Activated CD4-positive, alpha-beta T cell treated with anti-CD3 and anti-CD28 coated beads, Interleukin-2, amount 10 ng/mL, durations not matched to agents 7 days and 5 days (primary cell): ENCODE measurements at regions of chr14 and their contacts with region 1.

Region 1: DNA sequence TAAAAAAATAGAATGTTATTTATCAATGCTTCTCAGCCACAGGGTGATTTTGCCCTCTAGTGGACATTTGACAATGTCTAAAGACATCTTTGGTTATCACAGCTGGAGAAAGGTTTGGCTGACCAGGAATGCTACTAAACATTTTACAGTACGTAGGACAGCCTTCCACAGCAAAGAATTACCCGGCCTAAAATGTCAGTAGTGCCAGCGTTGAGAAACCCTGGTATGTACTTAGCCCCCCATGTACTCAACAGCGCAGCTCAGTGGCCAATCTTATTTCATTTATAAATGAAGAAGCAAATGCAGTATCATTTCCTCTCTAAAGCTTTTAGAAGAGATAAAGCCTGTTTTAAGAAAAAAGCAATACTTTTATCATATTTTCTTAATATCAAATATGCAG is 5.8 kb downstream of the MARK3 start:
- DNase-seq: peak; percentile 68
- H3K4me3 Mint-ChIP-seq: no peak overlapping the region
- H3K27ac Mint-ChIP-seq: no peak overlapping the region
- H3K4me1 Mint-ChIP-seq: peaks cover 56% of the 10 kb centered on the region
- H3K27me3 Mint-ChIP-seq: no peaks in the 10 kb centered on the region

Region 2: DNA sequence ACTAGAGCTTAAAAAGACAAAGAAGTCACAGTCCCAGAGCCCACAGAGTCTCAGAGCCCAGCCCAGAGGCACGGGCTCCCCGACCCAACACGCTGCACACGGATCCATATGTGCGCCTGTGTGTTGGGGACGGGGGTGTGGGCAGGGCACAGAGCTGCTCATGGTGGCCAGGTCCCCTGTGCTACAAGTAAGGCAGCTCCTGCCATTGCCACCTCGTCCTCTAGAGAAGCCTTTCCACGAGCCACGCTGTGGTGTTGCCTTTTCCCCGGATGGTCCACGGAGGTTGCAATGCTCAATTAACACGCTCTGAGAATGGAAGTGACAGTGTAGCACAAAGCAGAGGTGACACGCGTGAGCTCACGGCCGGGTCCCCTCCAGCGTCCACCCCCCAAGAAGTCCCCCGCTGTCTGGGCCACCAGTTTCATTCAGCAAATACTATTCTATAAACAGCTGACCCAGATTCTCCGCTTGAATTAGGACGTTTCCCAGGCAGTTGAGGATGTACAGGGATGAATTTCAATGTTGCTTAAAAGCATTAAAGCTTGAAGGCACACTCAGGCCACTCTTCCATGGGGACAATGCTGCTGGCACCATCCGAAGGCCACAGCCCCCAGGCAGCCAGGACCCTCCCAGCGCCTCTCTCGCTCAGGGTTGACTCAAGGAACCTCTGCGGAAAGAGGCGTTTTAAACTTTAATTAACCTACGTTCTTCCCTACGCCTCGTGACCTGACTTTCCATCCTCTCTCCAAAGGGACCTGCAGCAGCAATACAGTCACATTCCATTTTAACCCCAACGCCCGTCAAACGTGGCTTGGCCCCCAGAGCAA is 79.7 kb before region 1 on chr14:
- CTCF ChIA-PET with region 1: no interaction called
- POLR2A ChIA-PET with region 1: no interaction called
- DNase-seq: no peak
- H3K4me3 Mint-ChIP-seq: no peak overlapping the region
- H3K27ac Mint-ChIP-seq: no peak overlapping the region
- H3K4me1 Mint-ChIP-seq: no peaks in the 10 kb centered on the region
- H3K27me3 Mint-ChIP-seq: no peaks in the 10 kb centered on the region

Region 3: DNA sequence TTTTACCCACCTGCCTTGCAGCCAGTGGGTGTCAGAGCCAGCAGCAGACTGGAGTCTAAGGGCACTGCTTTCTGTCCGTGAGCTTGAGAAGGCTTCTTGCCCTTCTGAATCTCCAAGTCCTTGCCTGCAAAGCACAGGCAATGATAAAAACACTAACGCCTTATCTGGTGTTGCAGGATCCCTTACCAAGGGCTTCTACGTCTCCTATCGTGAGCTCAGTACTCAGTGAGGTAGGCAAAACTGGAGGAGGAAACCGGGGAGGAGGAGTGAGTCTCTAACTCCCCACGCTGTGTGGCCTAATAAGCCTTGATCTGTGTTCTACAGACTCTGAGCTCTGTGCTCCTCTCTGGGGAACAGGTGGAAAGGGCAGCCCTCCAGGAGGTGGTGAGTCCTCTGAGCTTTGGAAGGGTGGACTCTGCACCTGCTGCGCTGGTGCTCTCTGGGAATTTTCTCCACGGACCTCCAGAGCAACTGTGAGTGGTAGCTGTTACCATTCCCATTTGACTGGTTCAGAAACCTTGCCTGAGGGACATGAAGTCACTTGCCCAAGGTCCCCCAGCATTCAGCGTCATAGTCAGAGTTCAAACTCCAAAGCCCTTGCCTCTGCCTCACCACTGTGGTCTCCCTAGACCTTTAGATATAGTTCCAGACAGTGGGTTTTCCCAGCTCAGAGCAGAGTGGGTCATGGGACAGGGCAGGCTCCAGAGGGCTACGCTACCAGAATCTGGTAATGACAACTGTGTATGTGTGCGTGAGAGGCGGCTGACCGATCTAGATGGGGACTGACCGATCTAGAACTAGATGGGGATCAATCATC is 12.8 kb before region 1 on chr14:
- CTCF ChIA-PET with region 1: interaction called, 13 read pairs
- POLR2A ChIA-PET with region 1: no interaction called
- DNase-seq: no peak
- H3K4me3 Mint-ChIP-seq: no peak overlapping the region
- H3K27ac Mint-ChIP-seq: no peak overlapping the region
- H3K4me1 Mint-ChIP-seq: peaks cover 9% of the 10 kb centered on the region
- H3K27me3 Mint-ChIP-seq: peaks cover 12% of the 10 kb centered on the region

Region 4: DNA sequence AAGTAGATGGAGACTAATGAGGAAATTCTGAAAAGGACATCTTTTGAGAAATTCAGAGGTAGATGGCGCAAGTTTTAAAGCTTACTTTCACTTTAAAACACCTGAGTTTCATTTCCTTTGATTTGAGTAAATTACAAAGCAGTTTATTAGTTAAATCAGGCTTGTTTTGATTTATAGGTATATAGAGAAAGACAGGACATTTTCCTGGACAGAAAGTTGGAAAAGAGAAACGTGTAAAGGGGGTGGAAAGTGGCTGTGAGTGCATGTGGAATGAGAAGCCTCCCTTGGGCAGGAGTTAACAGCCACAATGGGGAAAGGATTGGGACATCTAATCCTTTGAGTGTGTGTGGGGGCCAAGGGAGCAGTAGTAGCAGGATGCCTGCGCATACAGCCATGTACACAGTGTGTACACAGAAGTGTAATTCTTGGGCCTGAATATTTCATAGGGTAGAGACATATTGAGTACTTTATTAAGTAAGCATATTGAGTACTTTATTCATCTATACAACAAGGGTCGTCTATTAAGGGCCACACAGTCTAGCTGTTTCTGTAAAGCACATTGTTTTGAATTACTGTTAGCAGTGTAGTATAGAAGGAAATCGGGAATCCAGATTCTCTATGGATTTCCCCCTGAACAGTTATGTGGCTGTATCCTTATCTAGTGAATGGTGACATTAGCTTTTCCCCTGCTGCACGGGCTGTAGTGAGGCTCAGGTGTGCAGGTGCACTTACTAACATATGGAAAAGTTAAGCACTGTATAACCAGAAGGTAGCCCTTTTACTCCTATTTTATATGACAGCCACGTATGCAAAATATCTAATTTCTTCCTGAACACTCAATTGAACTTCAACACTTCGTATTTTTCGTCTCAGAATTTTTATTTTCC is 13.2 kb after region 1 on chr14:
- CTCF ChIA-PET with region 1: interaction called, 13 read pairs
- POLR2A ChIA-PET with region 1: no interaction called
- DNase-seq: no peak
- H3K4me3 Mint-ChIP-seq: peak overlapping the region; percentile 26
- H3K27ac Mint-ChIP-seq: peak overlapping the region; percentile 77
- H3K4me1 Mint-ChIP-seq: peaks cover 40% of the 10 kb centered on the region
- H3K27me3 Mint-ChIP-seq: no peaks in the 10 kb centered on the region